Sciatic nerve (tissue), 2 donors: ENCODE measurements at regions of chr22 and their contacts with region 1.

Region 1: DNA sequence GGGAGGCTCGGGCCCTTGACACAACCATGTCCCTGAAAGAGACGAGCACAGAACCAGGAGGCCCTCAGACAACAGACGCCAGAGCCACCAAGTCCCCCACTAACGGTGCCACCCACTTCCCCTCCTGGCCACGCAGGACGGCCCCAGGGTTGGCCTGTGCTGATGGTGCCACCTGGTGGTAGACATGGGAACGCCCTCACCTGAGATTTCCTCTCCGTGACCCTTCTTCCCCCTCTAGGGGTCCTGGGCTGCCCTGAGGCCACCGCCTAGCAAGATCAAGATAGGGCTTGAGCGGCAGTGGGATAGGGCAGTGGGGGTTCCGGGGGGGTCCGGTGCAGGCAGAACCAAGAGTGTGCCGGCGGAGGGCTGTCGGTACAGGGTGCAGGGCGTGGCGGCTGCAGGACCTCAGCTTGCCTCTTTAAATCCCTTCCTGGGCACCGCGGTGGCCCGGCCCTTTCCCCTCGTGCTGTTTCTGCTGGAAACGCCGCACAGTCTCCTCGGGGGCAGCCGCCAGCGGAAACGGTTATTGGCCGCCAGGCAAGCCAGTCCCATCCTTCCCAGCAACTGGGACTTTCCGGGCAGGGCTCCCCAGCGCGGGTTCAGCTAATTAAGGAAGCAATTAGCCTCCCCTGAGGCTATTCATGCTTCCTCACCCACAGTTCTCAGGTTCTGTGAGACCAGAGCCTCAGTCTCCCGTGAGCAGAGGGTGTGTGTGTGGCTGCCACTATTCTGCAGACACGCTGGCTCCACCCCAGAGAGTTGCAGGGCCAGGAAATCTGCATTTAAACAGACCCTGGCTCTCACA is 5.5 kb upstream of the NFAM1 start:
- DNase-seq: peak; percentile 89
- ATAC-seq: peak; percentile 84

Region 2: GRCh38 chr22:42090596-42091454 is 346.9 kb before region 1 on chr22 and contains the start of gene NDUFA6:
- intact Hi-C with region 1: loop called (anchors 10 kb)
- DNase-seq: peak; percentile 98
- ATAC-seq: peak; percentile 98
- total RNA-seq, gene NDUFA6: 31.9 TPM

Region 3: DNA sequence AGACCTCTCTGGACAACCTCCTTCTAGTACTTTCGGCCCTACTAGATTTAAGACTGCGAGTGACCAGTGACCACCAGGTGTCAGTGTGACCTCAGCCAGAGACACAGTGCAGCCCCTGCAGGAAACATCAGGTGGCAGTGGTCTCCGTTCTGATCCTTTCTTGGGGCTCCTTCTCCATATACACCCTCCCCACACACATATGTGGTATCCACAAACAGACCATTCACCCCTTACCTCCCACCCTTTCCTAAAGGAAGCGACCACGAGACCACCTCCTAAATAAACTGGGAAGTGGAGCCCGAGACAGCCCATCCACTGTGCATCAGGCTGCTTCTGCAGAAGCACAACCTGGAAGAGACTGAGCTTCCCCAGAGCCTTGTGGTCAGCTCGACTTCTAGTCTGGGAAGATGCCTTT is 268.6 kb before region 1 on chr22:
- intact Hi-C with region 1: loop called (anchors 5 kb)
- DNase-seq: peak; percentile 81
- ATAC-seq: peak; percentile 78

Region 4: DNA sequence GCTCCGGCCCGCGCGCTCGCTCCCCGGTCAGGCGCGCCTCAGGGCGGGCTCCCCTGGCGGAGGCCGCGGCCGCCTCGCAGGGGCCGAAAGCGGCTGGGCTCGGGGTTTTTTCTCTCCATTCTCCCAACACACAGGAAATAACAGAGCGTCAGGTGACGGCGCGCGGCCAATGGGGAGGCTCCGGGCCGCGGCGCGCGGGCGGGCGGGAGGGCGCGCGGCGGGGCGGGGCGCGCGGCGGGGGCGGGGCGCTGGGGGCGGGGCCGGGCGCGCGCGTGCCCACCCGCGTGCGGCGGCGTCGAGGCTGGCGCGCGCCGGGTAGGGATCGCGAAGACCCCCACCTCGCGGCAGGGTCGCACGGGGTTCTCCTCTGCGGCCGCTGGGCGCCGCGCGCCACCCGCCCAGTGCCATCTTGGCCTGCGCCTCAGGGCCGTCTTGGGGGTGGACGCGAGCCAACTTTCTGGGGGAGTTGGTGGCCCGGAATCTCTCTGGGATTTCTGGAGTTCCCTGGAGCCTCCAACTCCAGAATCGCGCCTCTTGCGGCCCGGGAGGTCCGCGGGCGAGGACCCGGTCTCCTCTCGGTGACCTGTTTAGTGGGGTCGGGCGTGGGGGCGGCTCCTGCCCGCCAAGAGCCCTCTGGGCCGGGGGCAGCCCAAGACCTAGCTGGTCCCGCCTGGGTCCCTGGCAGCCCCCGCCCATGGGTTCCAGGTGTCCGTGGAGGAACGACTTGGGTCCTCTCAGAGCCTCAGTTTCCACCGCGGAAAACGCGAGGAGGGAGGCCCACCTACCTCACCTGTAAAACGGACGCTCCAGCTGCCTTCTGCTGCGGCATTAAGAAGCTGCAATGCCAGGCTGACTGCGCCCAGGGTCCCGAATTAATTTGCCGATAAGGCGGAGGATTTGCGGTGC is 166.9 kb before region 1 on chr22 and contains the start of gene TCF20:
- intact Hi-C with region 1: loop called (anchors 10 kb)
- DNase-seq: peak; percentile 88
- ATAC-seq: peak; percentile 84
- total RNA-seq, gene TCF20: 46.1 TPM